WTC11 (cell line): ENCODE measurements at regions of chr20 and their contacts with region 1.

Region 1: DNA sequence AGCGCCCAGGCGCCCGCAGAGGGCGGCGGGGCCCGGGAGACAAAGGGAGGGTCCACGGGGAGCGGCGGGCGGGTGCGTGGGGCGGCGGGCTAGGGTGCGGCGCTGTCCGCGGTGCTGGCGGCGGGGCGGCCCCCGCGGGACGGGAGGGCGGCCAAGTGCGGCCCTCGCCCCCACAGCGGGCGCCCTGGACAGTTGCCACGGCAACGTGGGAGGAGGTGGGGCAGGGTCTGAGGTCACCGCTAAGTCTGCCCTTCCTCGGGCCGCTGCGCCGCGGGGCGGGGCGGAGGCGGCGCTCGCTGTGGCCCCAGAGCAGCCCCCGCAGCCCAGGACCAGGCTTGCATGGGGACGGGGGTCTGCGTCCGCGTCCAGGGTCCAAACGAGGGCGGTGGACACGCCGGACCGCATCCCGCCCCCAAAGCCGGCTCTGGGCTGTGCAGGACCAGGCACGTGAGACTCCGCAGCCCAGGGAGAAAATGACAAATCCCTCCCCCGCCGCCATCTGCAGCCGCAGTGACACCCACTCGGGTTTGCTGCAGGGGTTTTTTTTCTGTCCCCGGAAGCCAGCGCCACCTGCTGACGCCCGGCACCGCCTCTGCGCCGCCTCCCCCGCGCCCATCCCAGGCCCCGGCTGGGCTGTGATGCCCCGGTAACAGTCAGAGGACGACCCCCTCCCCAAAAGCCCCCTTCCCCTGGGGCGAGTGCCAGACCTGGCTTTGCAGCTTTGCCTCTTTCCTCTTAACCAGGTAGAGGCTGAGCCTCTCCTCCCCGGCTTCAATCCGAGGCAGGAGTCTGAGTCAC is 36.8 kb downstream of the YTHDF1 start:
- DNase-seq: peak; percentile 57
- ATAC-seq: peak; percentile 1; the same call in 1 of the 2 replicates
- H3K4me3 Mint-ChIP-seq: peak overlapping the region; percentile 65
- H3K27ac Mint-ChIP-seq: no peak overlapping the region
- H3K4me1 Mint-ChIP-seq: peaks cover 10% of the 10 kb centered on the region
- H3K27me3 Mint-ChIP-seq: peaks cover 47% of the 10 kb centered on the region
- CTCF ChIP-seq: no peak

Region 2: DNA sequence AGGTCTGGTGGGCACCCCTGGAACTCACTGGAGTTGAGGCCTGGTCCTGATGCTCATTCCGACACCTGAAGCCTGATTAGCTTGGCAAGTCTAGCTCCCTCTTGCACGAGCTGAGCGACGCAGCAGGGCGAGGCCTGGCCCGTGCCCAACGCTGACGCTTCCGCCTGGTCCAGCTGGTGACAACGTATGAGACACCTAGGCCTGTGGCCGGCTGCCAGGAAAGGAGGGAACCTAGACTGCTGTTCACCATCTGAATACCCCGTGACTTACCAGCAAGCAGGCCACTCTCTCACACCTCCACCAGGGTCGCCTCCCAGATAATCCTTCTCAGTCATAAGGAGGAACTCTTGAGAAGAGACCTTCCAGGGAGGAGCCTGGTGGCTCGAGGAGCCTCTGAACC is 12.3 kb after region 1 on chr20:
- CTCF ChIA-PET with region 1: interaction called, 15 read pairs
- POLR2A ChIA-PET with region 1: no interaction called
- DNase-seq: no peak
- ATAC-seq: no peak
- H3K4me3 Mint-ChIP-seq: no peak overlapping the region
- H3K27ac Mint-ChIP-seq: peak overlapping the region; percentile 65; the same call in 1 of the 2 replicates
- H3K4me1 Mint-ChIP-seq: peaks cover 7% of the 10 kb centered on the region
- H3K27me3 Mint-ChIP-seq: no peaks in the 10 kb centered on the region
- CTCF ChIP-seq: no peak

Region 3: DNA sequence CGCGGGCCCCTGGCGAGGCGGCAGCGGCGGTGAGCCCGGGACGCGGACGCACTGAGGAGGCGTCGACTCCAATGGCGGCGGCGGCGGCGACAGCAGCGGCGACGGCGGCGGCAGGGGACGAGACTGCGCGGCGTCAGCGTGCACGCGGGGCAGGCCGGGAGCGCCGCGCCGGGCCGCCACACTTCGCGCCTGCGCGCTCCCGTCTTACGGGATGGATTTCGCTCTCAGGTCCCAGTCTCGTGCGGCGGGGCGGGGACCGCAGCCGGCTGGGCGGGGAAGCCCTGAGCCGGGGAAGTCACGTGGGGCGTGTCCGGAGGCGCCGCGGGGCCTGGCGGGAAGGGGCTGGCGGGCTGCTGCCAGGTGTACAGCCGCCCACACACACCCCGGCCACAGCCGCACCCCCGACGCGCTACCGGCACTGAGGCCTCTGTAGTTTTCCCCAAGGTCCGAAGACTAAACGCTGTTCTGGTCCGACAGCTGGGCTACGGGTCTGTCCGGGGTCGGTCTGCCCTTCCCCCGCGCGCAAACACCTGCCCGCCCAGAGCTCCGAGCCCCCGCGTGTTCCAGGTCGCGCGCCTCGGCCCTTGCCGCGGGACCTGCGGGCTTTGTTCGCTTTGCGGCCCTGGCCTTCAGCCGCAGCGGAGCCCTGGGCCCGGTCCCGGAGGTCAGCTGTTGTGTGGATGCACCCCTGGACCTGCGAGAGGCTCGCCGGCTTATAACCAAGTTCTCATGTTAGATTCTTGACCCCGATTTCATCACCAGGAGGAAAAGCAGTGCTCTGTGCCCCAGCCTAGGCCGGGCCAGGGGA is 37.2 kb after region 1 on chr20 and contains the start of gene YTHDF1:
- CTCF ChIA-PET with region 1: interaction called, 13 read pairs
- POLR2A ChIA-PET with region 1: no interaction called
- DNase-seq: peak; percentile 93
- ATAC-seq: peak; percentile 85
- H3K4me3 Mint-ChIP-seq: peak within 1 kb of the TSS; percentile 96
- H3K27ac Mint-ChIP-seq: peak within 1 kb of the TSS; percentile 93
- H3K4me1 Mint-ChIP-seq: peaks cover 28% of the 10 kb centered on the region
- H3K27me3 Mint-ChIP-seq: peaks cover 4% of the 10 kb centered on the region; the same call in 1 of the 2 replicates
- CTCF ChIP-seq: no peak
- total RNA-seq, gene YTHDF1: 50.2 to 61.3 TPM (median 51.3 TPM) in 3 replicates